ENCODE measurements at regions of chr7 and their contacts with region 1.

Region 1: DNA sequence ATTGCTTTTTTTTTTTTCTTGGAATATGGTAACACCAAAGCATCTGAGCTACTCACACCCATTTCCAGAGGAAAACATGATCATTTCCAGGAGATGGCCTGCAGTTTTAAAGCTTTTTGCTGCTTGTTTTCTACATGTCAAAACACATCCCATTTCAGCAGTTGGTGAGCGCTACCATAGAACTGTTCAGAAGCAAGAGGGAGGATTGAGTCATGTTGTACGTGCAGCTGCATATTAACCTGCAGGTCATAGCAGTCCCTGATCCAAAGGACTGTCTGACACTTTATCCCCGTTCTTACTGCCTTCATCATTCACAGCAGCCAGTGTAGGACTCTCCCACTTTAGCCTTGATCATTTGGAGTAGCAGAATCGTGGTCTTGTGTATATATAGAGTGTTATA is 124.6 kb downstream of the AUTS2 start:
- DNase-seq: peak; percentile 1
- H3K4me3 ChIP-seq: no peak overlapping the region
- H3K27ac ChIP-seq: no peak overlapping the region
- H3K4me1 ChIP-seq: no peaks in the 10 kb centered on the region
- H3K27me3 ChIP-seq: no peaks in the 10 kb centered on the region
- CTCF ChIP-seq: no peak

Region 2: GRCh38 chr7:69668339-69668870 is 54.4 kb before region 1 on chr7:
- CTCF ChIA-PET with region 1: no interaction called
- dilution Hi-C with region 1: loop called (anchors 5 kb)
- in situ Hi-C with region 1: no loop called
- intact Hi-C with region 1: no loop called
- DNase-seq: no peak
- H3K4me3 ChIP-seq: no peak overlapping the region
- H3K27ac ChIP-seq: no peak overlapping the region
- H3K4me1 ChIP-seq: no peaks in the 10 kb centered on the region
- H3K27me3 ChIP-seq: no peaks in the 10 kb centered on the region
- CTCF ChIP-seq: no peak

Region 3: GRCh38 chr7:69692626-69693025 is 30.2 kb before region 1 on chr7:
- CTCF ChIA-PET with region 1: interaction called, 10 read pairs
- dilution Hi-C with region 1: no loop called
- in situ Hi-C with region 1: no loop called
- intact Hi-C with region 1: no loop called
- DNase-seq: no peak
- H3K4me3 ChIP-seq: no peak overlapping the region
- H3K27ac ChIP-seq: no peak overlapping the region
- H3K4me1 ChIP-seq: no peaks in the 10 kb centered on the region
- H3K27me3 ChIP-seq: no peaks in the 10 kb centered on the region
- CTCF ChIP-seq: no peak